ENCODE measurements at regions of chr1 and their contacts with region 1.

Region 1: DNA sequence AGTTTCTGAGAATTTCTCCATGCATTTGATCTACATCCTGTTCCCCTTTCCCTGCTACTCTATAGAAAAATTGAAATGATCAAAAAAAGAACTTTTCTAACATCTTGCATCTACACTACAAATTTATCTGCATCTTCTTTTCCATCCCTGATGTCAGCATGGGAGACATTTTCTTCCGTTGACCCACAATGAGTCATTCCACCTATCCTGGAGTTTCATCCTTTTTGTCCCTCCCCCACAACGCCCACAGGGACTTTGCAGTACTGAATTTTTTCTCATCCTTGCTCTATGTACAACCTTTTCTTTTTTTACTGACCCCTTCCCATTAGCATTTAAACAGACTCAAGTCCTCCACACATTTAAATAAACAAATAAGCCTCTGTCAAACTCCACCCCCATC is 112.2 kb upstream of the MROH9 start:
- DNase-seq: no peak
- H3K4me3 ChIP-seq: no peak overlapping the region
- H3K27ac ChIP-seq: no peak overlapping the region
- H3K4me1 ChIP-seq: no peaks in the 10 kb centered on the region
- H3K27me3 ChIP-seq: no peaks in the 10 kb centered on the region
- CTCF ChIP-seq: no peak

Region 2: DNA sequence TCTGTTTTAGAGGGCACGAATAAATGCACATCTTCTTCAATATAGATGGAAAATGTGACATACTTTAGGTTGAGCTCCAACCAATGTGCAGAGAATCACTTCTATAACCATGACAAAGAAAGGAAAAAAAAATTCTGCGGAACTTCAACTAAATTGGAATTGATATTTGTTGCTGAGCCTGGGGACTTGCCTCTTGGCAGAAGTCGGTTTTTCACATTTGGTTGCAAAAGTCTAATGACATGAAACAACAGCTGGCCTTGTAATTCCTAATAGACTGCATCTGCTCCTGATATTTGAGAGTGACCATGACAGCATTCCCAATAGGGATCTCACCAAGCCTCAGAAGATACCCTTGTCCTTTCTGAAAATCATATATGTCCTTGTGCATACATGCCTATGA is 46.3 kb before region 1 on chr1:
- intact Hi-C with region 1: no loop called
- DNase-seq: no peak
- H3K4me3 ChIP-seq: no peak overlapping the region
- H3K27ac ChIP-seq: no peak overlapping the region
- H3K4me1 ChIP-seq: no peaks in the 10 kb centered on the region
- H3K27me3 ChIP-seq: no peaks in the 10 kb centered on the region
- CTCF ChIP-seq: no peak

Region 3: GRCh38 chr1:170856455-170856854 is 33.3 kb after region 1 on chr1:
- intact Hi-C with region 1: loop called (anchors 5 kb)
- DNase-seq: no peak
- H3K4me3 ChIP-seq: peak overlapping the region in 1 of 2 donors; percentile 2
- H3K27ac ChIP-seq: no peak overlapping the region
- H3K4me1 ChIP-seq: no peaks in the 10 kb centered on the region
- H3K27me3 ChIP-seq: no peaks in the 10 kb centered on the region
- CTCF ChIP-seq: no peak

Region 4: GRCh38 chr1:170929835-170930554 is 106.9 kb after region 1 on chr1:
- intact Hi-C with region 1: no loop called
- DNase-seq: no peak
- H3K4me3 ChIP-seq: peak overlapping the region in 1 of 2 donors; percentile 48
- H3K27ac ChIP-seq: peak overlapping the region; percentile 74 to 81
- H3K4me1 ChIP-seq: no peaks in the 10 kb centered on the region
- H3K27me3 ChIP-seq: no peaks in the 10 kb centered on the region
- CTCF ChIP-seq: peak; percentile 51 to 83 (median 69)